CD4-positive, alpha-beta memory T cell (primary cell): ENCODE measurements at regions of chr12 and their contacts with region 1.

Region 1: GRCh38 chr12:6662906-6663742 is at the start of gene ING4:
- DNase-seq: peak; percentile 95 to 99 (median 98)
- H3K4me3 ChIP-seq: peak within 1 kb of the TSS; percentile 97
- H3K4me3 Mint-ChIP-seq: peak within 1 kb of the TSS; percentile 91 to 97 (median 94)
- H3K27ac ChIP-seq: peak within 1 kb of the TSS; percentile 79
- H3K27ac Mint-ChIP-seq: peak within 1 kb of the TSS; percentile 88 to 98 (median 98)
- H3K4me1 ChIP-seq: peaks cover 21% of the 10 kb centered on the region
- H3K4me1 Mint-ChIP-seq: peaks cover 20 to 42% (median 30%) of the 10 kb centered on the region in 4 donors
- H3K27me3 ChIP-seq: no peaks in the 10 kb centered on the region
- H3K27me3 Mint-ChIP-seq: no peaks in the 10 kb centered on the region
- total RNA-seq, gene ING4: 82.3 to 83.5 TPM

Region 2: DNA sequence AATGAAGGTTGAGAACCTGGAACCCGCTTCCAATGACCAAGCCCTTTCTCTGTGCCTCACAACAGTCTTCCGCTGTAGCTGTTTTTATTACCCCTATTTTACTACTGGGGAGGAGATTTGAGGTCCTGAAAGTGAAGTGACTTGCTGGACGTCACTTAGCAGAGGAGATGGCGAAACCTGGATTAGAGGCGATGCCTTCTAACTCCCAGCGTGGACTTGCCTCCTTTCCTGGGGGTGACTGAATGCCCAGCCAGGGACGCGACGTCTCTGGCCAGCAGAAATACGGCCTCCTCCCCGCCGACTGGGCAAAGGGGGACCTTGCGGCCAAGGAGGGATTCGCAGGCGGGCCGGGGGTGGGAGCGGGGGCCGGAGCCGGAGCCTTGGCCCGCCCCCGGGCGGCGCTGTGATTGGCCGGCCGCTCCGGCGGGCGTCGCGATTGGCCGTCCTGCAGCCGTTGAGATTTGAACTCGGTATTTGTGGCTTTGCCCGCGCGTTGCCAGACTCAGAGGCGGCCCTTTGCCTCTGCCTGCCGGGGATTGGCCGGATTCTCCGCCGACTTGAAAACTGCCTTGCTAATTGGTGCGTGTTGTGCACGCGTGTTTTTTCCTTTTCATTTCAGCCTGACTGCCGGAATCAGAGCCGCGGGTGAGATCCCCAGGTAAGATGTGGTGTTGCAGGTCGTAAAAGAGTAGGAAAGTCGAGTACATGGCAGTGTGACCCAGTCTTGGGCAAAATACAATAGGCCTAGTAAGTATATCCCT is 169.4 kb before region 1 on chr12 and contains the start of gene NCAPD2:
- CTCF ChIA-PET with region 1: no interaction called
- POLR2A ChIA-PET with region 1: no interaction called
- intact Hi-C with region 1: loop called (anchors 2 kb)
- DNase-seq: peak; percentile 96 to 97 (median 96)
- H3K4me3 ChIP-seq: peak within 1 kb of the TSS; percentile 98 to 99
- H3K4me3 Mint-ChIP-seq: peak within 1 kb of the TSS; percentile 89 to 98 (median 96)
- H3K27ac ChIP-seq: peak within 1 kb of the TSS; percentile 87
- H3K27ac Mint-ChIP-seq: peak within 1 kb of the TSS; percentile 90 to 99 (median 97)
- H3K4me1 ChIP-seq: peaks cover 37% of the 10 kb centered on the region
- H3K4me1 Mint-ChIP-seq: peaks cover 26 to 46% (median 35%) of the 10 kb centered on the region in 4 donors
- H3K27me3 ChIP-seq: no peaks in the 10 kb centered on the region
- H3K27me3 Mint-ChIP-seq: no peaks in the 10 kb centered on the region
- total RNA-seq, gene NCAPD2: 38.1 to 39.8 TPM

Region 3: DNA sequence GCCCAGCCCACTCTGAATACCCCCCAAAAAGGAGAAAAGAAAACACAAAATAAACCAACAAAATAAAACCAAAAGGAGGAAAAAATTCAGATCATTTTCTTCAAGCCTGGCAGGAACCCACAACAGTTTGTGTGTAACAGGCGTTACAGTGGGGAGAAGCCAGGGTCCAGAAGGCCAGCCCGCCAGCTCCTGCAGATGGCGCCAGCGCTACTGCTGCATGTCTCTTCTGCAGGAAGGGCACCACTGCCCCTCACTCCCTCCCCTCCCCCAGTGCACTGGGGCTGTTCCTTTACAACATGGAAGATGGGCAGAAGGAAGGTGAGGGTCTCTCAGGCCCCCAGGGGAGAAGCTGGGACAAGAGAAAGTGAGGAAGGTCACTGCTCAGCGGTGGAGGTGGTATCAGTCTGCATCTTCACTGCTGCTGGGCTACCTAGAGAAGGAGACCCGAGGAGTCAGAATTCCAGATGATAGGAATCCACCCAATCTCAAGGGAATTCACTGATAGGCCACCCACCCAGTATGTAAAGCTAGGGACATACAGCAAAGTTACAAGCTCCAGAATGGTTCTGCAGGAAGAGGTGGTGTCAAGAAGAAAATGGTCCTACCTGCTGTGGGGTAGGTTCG is 92.7 kb before region 1 on chr12:
- CTCF ChIA-PET with region 1: no interaction called
- POLR2A ChIA-PET with region 1: no interaction called
- intact Hi-C with region 1: loop called (anchors 5 kb)
- DNase-seq: peak in 3 of 5 donors; percentile 20 to 29 (median 25)
- H3K4me3 ChIP-seq: no peak overlapping the region
- H3K4me3 Mint-ChIP-seq: peak overlapping the region in 5 of 8 donors; percentile 10 to 100 (median 61)
- H3K27ac ChIP-seq: no peak overlapping the region
- H3K27ac Mint-ChIP-seq: peak overlapping the region; percentile 67 to 100 (median 75)
- H3K4me1 ChIP-seq: peaks cover 42% of the 10 kb centered on the region
- H3K4me1 Mint-ChIP-seq: peaks cover 17 to 51% (median 33%) of the 10 kb centered on the region in 4 donors
- H3K27me3 ChIP-seq: no peaks in the 10 kb centered on the region
- H3K27me3 Mint-ChIP-seq: no peaks in the 10 kb centered on the region

Region 4: GRCh38 chr12:6592087-6592486 is 71.0 kb before region 1 on chr12:
- CTCF ChIA-PET with region 1: no interaction called
- POLR2A ChIA-PET with region 1: no interaction called
- intact Hi-C with region 1: no loop called
- DNase-seq: no peak
- H3K4me3 ChIP-seq: no peak overlapping the region
- H3K4me3 Mint-ChIP-seq: no peak overlapping the region
- H3K27ac ChIP-seq: no peak overlapping the region
- H3K27ac Mint-ChIP-seq: peak overlapping the region in 1 of 7 donors; percentile 77
- H3K4me1 ChIP-seq: no peaks in the 10 kb centered on the region
- H3K4me1 Mint-ChIP-seq: peaks cover 5 to 16% (median 9%) of the 10 kb centered on the region in 4 donors
- H3K27me3 ChIP-seq: no peaks in the 10 kb centered on the region
- H3K27me3 Mint-ChIP-seq: no peaks in the 10 kb centered on the region

Region 5: DNA sequence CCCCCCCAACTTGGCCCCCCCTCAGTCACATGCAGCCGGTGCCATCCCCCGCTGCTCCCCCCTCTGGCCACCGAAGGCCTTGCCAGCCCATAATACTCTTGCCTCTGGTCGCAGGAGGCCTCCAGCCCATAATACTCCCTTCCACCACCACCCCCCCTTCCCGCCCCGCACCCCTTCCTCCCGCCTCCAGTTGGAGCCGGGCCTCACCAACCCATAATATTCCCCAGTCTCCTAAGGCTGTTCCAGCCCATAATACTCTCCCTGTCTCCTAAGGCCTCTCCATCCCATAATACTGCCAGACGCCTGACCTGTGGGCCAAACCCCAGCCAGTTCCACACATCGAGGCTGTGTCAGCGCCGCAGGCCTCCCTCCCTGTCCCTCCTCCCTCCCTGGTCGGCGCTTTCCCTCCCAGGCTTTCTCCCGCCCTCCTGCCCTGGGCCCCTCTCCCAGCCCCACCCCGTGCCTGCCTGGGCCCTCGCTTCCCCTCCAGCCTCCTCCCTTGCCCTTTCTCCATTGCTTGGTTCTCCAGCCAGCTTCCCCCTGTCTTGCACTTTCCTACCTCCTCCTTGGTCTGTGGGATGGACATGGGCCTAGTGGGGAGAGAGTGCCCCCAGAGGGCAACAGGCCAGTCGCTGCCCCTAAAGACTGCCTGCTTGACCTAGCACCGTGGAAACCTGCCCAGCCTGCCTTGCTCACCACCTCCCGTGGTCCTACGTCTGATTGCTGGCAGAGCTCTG is 49.2 kb before region 1 on chr12:
- CTCF ChIA-PET with region 1: no interaction called
- POLR2A ChIA-PET with region 1: interaction called, 3 read pairs
- intact Hi-C with region 1: loop called (anchors 2 kb)
- DNase-seq: peak in 4 of 5 donors; percentile 42 to 60 (median 53)
- H3K4me3 ChIP-seq: no peak overlapping the region
- H3K4me3 Mint-ChIP-seq: peak overlapping the region in 1 of 8 donors; percentile 67
- H3K27ac ChIP-seq: no peak overlapping the region
- H3K27ac Mint-ChIP-seq: peak overlapping the region; percentile 26 to 93 (median 85)
- H3K4me1 ChIP-seq: peaks cover 31% of the 10 kb centered on the region
- H3K4me1 Mint-ChIP-seq: peaks cover 23 to 50% (median 34%) of the 10 kb centered on the region in 4 donors
- H3K27me3 ChIP-seq: no peaks in the 10 kb centered on the region
- H3K27me3 Mint-ChIP-seq: no peaks in the 10 kb centered on the region

Region 6: GRCh38 chr12:6723607-6724396 is 60.7 kb after region 1 on chr12 and contains the start of gene COPS7A:
- CTCF ChIA-PET with region 1: interaction called, 5 read pairs
- POLR2A ChIA-PET with region 1: interaction called, 27 read pairs
- intact Hi-C with region 1: loop called (anchors 1 kb)
- DNase-seq: peak; percentile 93 to 97 (median 96)
- H3K4me3 ChIP-seq: peak within 1 kb of the TSS; percentile 40 to 64
- H3K4me3 Mint-ChIP-seq: peak within 1 kb of the TSS; percentile 88 to 98 (median 94)
- H3K27ac ChIP-seq: peak within 1 kb of the TSS; percentile 68
- H3K27ac Mint-ChIP-seq: peak within 1 kb of the TSS; percentile 92 to 99 (median 98)
- H3K4me1 ChIP-seq: peaks cover 21% of the 10 kb centered on the region
- H3K4me1 Mint-ChIP-seq: peaks cover 15 to 31% (median 22%) of the 10 kb centered on the region in 4 donors
- H3K27me3 ChIP-seq: no peaks in the 10 kb centered on the region
- H3K27me3 Mint-ChIP-seq: no peaks in the 10 kb centered on the region
- total RNA-seq, gene COPS7A: 36.9 to 37.7 TPM

Region 7: DNA sequence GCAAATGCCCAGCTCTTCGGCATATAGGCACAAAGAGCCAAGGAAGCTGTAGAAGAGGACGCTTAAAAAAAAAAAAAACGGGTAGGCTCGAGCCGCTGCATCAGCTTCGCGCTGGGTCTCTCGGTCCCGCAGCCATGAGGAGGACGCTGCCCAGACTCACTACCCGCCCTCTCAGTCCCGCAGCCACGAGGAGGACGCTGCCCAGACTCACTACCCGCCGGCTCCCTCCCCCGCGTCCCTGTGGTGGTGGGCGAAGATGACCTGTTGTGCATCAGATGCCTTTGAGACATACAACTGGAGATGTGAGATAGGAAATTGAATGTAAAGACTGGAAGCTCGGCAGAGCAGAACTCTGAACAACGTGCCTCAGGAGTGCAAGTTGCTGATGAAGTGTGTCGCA is 221.4 kb after region 1 on chr12:
- CTCF ChIA-PET with region 1: no interaction called
- POLR2A ChIA-PET with region 1: no interaction called
- intact Hi-C with region 1: no loop called
- DNase-seq: no peak
- H3K4me3 ChIP-seq: no peak overlapping the region
- H3K4me3 Mint-ChIP-seq: no peak overlapping the region
- H3K27ac ChIP-seq: no peak overlapping the region
- H3K27ac Mint-ChIP-seq: no peak overlapping the region
- H3K4me1 ChIP-seq: no peaks in the 10 kb centered on the region
- H3K4me1 Mint-ChIP-seq: no peaks in the 10 kb centered on the region
- H3K27me3 ChIP-seq: no peaks in the 10 kb centered on the region
- H3K27me3 Mint-ChIP-seq: no peaks in the 10 kb centered on the region